ENCODE measurements at regions of chr1 and their contacts with region 1.

Region 1: GRCh38 chr1:184051485-184052193 is at the start of gene TSEN15:
- DNase-seq: peak; percentile 86
- ATAC-seq: peak; percentile 97
- H3K4me3 ChIP-seq: peak within 1 kb of the TSS; percentile 59
- H3K27ac ChIP-seq: peak within 1 kb of the TSS; percentile 98
- H3K4me1 ChIP-seq: peaks cover 10% of the 10 kb centered on the region; the same call in 1 of the 2 replicates
- H3K27me3 ChIP-seq: no peaks in the 10 kb centered on the region
- CTCF ChIP-seq: no peak
- POLR2A ChIP-seq: peak; percentile 82
- RAD21 ChIP-seq: peak; percentile 34
- total RNA-seq, gene TSEN15: 45.0 and 80.3 TPM in 2 replicates

Region 2: GRCh38 chr1:183635606-183636333 is 415.9 kb before region 1 on chr1 and contains the start of gene ARPC5:
- CTCF ChIA-PET with region 1: no interaction called
- POLR2A ChIA-PET with region 1: no interaction called
- dilution Hi-C with region 1: no loop called
- in situ Hi-C with region 1: loop called (anchors 10 kb)
- intact Hi-C with region 1: loop called (anchors 10 kb)
- DNase-seq: peak; percentile 98
- ATAC-seq: peak; percentile 85
- H3K4me3 ChIP-seq: peak within 1 kb of the TSS; percentile 85
- H3K27ac ChIP-seq: peak within 1 kb of the TSS; percentile 96
- H3K4me1 ChIP-seq: peaks cover 2% of the 10 kb centered on the region
- H3K27me3 ChIP-seq: no peaks in the 10 kb centered on the region
- CTCF ChIP-seq: no peak
- POLR2A ChIP-seq: peak; percentile 88
- RAD21 ChIP-seq: 0 out of 2 replicates have a peak, but pooled peaks have one; percentile 2
- total RNA-seq, gene ARPC5: 212 and 361 TPM in 2 replicates

Region 3: GRCh38 chr1:183932412-183932811 is 119.2 kb before region 1 on chr1:
- CTCF ChIA-PET with region 1: no interaction called
- POLR2A ChIA-PET with region 1: interaction called, 3 read pairs
- dilution Hi-C with region 1: no loop called
- in situ Hi-C with region 1: no loop called
- intact Hi-C with region 1: loop called (anchors 5 kb)
- DNase-seq: peak; percentile 90
- ATAC-seq: peak; percentile 89
- H3K4me3 ChIP-seq: no peak overlapping the region
- H3K27ac ChIP-seq: no peak overlapping the region
- H3K4me1 ChIP-seq: peaks cover 3% of the 10 kb centered on the region
- H3K27me3 ChIP-seq: no peaks in the 10 kb centered on the region
- CTCF ChIP-seq: no peak
- POLR2A ChIP-seq: no peak
- RAD21 ChIP-seq: no peak

Region 4: DNA sequence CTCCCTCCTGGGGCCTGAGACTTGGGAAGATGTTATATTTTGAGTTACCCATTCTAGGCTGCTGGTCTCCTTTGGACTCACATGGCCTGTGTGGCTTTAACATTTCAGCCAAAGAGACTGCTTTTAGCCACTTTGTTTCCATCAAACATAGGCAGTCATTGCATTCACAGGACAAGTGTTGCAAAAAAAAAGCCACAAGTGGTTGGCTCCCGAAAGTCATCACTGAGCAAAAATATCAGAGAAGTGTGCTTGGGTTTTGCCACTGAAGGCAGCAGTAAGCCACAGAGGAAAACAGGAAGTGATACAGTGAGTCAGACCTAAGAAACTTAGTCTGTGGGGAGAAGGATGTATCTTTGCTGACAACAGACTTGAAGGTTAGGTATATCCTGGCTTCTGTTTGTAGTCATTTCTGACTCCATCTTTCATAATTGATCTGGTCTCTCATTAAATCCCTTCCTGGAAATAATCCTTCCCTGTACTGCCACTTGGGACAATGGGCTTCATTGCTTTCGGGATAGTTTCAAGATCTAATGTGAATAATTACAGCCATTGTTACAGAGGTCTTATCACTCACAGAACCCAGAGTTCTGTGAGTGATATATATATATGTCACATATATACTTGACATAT is 95.0 kb before region 1 on chr1:
- CTCF ChIA-PET with region 1: no interaction called
- POLR2A ChIA-PET with region 1: no interaction called
- dilution Hi-C with region 1: no loop called
- in situ Hi-C with region 1: no loop called
- intact Hi-C with region 1: loop called (anchors 1 kb)
- DNase-seq: peak; percentile 87
- ATAC-seq: peak; percentile 99
- H3K4me3 ChIP-seq: no peak overlapping the region
- H3K27ac ChIP-seq: no peak overlapping the region
- H3K4me1 ChIP-seq: peaks cover 6% of the 10 kb centered on the region
- H3K27me3 ChIP-seq: no peaks in the 10 kb centered on the region; the same call in 1 of the 2 replicates
- CTCF ChIP-seq: peak; percentile 46
- POLR2A ChIP-seq: no peak
- RAD21 ChIP-seq: peak; percentile 61

Region 5: GRCh38 chr1:183989078-183989577 is 62.5 kb before region 1 on chr1:
- CTCF ChIA-PET with region 1: no interaction called
- POLR2A ChIA-PET with region 1: no interaction called
- dilution Hi-C with region 1: no loop called
- in situ Hi-C with region 1: no loop called
- intact Hi-C with region 1: no loop called
- DNase-seq: peak; percentile 95
- ATAC-seq: peak; percentile 91
- H3K4me3 ChIP-seq: no peak overlapping the region
- H3K27ac ChIP-seq: peak overlapping the region; percentile 32; the same call in 1 of the 2 replicates
- H3K4me1 ChIP-seq: peaks cover 14% of the 10 kb centered on the region
- H3K27me3 ChIP-seq: no peaks in the 10 kb centered on the region
- CTCF ChIP-seq: no peak
- POLR2A ChIP-seq: no peak
- RAD21 ChIP-seq: peak; percentile 10; the same call in 1 of the 2 replicates